Gastrocnemius medialis (tissue), 4 donors: ENCODE measurements at regions of chr21 and their contacts with region 1.

Region 1: DNA sequence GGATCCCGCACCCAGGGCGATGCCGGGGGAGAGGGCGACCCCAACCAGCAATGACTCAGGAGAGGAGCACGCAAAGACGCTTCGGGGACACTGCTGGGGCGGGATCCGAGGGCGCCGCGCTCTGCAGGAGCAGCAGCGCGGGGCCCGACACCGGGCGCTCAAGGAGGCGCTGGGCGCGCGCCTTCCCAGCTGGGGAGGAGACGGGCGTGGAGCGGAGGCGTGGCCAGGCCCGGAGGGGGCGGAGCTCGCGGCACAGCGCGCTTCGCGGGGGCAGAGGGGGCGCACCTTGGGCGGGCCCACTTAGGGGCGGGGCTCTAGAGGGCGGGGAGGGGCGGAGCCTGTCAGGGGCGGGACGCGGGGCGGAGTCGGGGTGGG is 369 bp downstream of the SUMO3 start:
- DNase-seq: peak; percentile 85 to 87
- ATAC-seq: peak; percentile 77 to 78
- H3K4me3 ChIP-seq: peak overlapping the region; percentile 62 to 90 (median 74)
- H3K27ac ChIP-seq: peak overlapping the region; percentile 78 to 91 (median 90)
- H3K4me1 ChIP-seq: peaks cover 9 to 22% of the 10 kb centered on the region in 2 donors
- H3K27me3 ChIP-seq: no peaks in the 10 kb centered on the region
- CTCF ChIP-seq: no peak
- POLR2A ChIP-seq: no peak

Region 2: DNA sequence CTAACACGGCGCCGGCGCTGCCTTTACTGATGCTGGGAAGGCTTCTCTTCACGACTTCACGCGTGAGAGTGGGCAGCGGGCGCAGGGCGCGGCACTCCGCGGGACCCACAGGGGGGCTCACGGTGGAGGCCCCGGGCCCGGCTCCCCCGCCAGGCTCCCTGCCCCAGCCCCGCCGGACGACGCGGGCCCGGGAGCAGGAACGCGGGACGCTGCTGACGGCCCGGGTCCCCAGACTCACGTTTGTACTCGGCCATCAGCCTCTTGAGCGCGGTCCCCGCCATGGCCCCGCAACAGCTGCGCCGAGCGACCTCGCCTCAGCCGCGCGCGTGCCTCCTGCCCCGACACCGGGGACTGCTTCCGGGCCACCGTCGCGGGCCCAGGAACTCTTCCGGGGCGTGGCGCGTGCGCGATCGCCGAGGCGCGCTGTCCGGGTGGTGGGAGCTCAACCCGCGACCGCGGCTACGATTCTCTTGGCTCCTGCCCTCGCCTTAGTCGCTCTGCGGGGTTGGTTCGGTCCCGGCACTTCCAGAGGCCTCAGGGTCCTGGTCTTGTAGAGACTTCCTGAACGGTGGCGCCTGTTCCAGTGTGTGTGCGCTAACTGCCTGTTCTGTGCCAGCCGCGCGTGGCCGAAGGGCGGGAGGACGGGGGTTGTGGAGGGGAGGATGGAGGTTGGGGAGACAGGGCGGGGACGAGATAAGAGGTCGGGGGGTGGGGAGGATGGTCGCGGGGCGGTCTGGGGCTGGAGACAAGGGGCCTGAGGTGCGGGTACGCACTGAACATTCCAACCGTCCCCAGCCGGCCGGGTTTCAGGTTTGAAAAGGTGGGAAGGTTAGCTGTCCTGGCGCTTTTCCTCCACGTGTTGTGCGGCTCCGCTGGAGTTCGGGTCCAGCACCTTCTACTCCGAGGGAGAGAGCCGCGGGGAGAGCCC is 15.8 kb before region 1 on chr21 and contains the start of gene UBE2G2:
- in situ Hi-C with region 1: no loop called
- intact Hi-C with region 1: loop called (anchors 1 kb)
- DNase-seq: peak; percentile 59 to 74
- ATAC-seq: peak; percentile 91 to 92
- H3K4me3 ChIP-seq: peak within 1 kb of the TSS; percentile 80 to 91 (median 89)
- H3K27ac ChIP-seq: peak within 1 kb of the TSS; percentile 86 to 95 (median 90)
- H3K4me1 ChIP-seq: peaks cover 23 to 39% of the 10 kb centered on the region in 2 donors
- H3K27me3 ChIP-seq: no peaks in the 10 kb centered on the region
- CTCF ChIP-seq: no peak
- POLR2A ChIP-seq: peak; percentile 87 to 91
- total RNA-seq, gene UBE2G2: 64.2 to 83.8 (median 73.3) TPM

Region 3: GRCh38 chr21:44854664-44855446 is 37.4 kb after region 1 on chr21:
- in situ Hi-C with region 1: no loop called
- intact Hi-C with region 1: loop called (anchors 5 kb)
- DNase-seq: peak; percentile 62 to 89
- ATAC-seq: peak; percentile 70 to 72
- H3K4me3 ChIP-seq: peak overlapping the region in 2 of 4 donors; percentile 9 to 16
- H3K27ac ChIP-seq: peak overlapping the region; percentile 87 to 89 (median 88)
- H3K4me1 ChIP-seq: peaks cover 42 to 48% of the 10 kb centered on the region in 2 donors
- H3K27me3 ChIP-seq: no peaks in the 10 kb centered on the region
- CTCF ChIP-seq: peak in 2 of 5 experiments; percentile 12 to 18
- POLR2A ChIP-seq: peak in 1 of 2 donors; percentile 46

Region 4: DNA sequence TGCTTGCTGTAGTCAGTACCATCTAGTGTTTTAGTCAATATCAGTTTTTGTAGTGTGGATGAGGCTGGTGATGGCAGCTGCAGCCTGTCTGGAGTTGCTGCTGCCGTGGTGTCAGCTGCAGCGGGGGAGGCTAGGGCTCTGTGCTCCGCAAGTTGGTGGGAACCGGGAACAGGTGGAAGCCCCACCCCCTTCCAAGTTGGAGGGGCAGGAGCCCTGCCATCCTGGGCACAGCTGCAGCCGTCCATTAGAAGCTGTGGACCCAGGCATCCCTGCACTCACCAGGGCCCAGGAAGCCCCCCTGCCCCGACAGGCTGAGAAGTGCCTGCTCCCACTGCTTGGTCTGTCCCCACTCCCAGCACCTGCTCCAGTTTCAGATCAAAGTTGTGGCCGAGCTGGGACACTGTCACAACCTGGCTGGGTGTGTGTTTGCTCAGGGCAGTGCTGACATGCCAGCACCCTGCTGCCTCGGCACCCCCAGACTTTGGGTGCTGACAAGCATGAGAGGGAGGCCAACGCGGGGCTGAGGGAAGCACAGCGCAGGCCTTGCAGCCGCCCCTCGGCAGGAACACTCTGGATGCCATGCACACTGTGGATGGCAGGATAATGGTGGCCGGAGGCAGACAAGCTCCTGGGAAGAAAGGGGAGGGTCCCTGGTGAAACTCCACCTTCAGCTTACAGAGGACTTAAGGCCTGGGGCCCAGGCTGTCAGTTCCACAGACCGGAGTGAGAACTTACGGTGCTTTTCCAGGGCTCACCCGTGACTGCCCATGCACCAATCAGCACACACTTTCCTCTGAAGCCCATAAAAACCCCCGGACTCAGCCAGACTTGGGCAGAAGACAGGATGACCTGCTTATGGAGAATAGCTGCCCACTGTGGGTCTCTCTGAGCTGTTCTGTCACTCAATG is 343.8 kb after region 1 on chr21:
- in situ Hi-C with region 1: no loop called
- intact Hi-C with region 1: no loop called
- DNase-seq: no peak
- ATAC-seq: no peak
- H3K4me3 ChIP-seq: no peak overlapping the region
- H3K27ac ChIP-seq: no peak overlapping the region
- H3K4me1 ChIP-seq: peaks cover 37 to 43% of the 10 kb centered on the region in 2 donors
- H3K27me3 ChIP-seq: no peaks in the 10 kb centered on the region
- CTCF ChIP-seq: no peak
- POLR2A ChIP-seq: no peak